ENCODE measurements at regions of chr15 and their contacts with region 1.

Region 1: GRCh38 chr15:71386448-71387236 is 271.4 kb downstream of the THSD4 start:
- DNase-seq: no peak
- H3K4me3 ChIP-seq: no peak overlapping the region
- H3K27ac ChIP-seq: no peak overlapping the region
- H3K4me1 ChIP-seq: 0 out of 2 replicates have a peak, but pooled peaks cover 7% of the 10 kb centered on the region
- H3K27me3 ChIP-seq: no peaks in the 10 kb centered on the region
- CTCF ChIP-seq: peak; percentile 59

Region 2: GRCh38 chr15:71136793-71137518 is 249.7 kb before region 1 on chr15:
- CTCF ChIA-PET with region 1: no interaction called
- POLR2A ChIA-PET with region 1: no interaction called
- intact Hi-C with region 1: no loop called
- DNase-seq: no peak
- H3K4me3 ChIP-seq: no peak overlapping the region
- H3K27ac ChIP-seq: no peak overlapping the region
- H3K4me1 ChIP-seq: peaks cover 22% of the 10 kb centered on the region
- H3K27me3 ChIP-seq: no peaks in the 10 kb centered on the region
- CTCF ChIP-seq: no peak

Region 3: DNA sequence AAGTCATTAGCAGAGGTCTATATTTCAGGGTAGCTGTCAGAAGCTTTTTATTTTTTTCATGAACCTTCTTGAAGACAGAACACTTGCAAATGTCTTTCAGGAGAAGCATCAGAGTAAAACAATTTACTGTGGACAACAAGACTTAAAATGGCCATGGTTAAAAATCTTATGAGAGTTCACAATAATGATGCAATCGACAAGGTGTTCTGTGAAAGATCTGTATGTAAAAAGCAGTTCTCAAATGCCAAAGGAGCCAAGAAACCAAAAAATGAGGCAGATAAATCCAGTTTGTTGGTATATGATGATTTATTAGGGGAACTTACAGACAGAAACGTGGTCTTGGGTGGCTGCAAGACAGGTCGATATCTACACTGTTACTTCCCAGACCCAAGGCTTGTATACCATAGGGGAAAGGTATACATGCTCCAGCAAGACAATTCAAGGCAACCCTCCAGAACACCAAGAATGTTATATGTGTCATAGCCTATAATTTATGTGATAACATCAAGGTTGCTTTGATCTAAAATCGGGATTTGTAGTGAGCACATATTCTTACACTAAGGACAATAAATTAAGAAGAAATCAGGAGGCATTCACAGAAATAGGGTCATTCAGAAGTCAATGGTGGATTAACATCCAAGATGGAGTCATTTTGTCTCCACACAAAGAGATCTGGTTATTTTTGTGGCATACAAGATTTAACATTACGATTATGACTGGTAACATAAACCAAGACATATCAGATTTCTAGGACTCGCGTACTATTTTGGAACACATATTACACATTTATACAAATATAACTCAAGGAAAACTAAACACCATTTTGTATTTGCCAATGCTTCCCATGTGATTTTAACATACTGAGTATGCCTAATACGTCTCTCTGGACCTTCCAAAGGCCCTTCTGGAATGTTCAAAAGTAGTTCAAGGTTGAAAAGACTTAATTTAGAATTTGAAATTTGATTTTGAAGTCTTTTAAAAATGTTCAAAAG is 45.0 kb after region 1 on chr15:
- CTCF ChIA-PET with region 1: interaction called, 17 read pairs
- POLR2A ChIA-PET with region 1: interaction called, 10 read pairs
- intact Hi-C with region 1: no loop called
- DNase-seq: no peak
- H3K4me3 ChIP-seq: no peak overlapping the region
- H3K27ac ChIP-seq: peak overlapping the region; percentile 37; the same call in 1 of the 2 replicates
- H3K4me1 ChIP-seq: no peaks in the 10 kb centered on the region; the same call in none of the 2 replicates
- H3K27me3 ChIP-seq: no peaks in the 10 kb centered on the region
- CTCF ChIP-seq: no peak

Region 4: GRCh38 chr15:71437404-71438318 is 51.0 kb after region 1 on chr15:
- CTCF ChIA-PET with region 1: interaction called, 17 read pairs
- POLR2A ChIA-PET with region 1: no interaction called
- intact Hi-C with region 1: no loop called
- DNase-seq: peak; percentile 48 to 56
- H3K4me3 ChIP-seq: no peak overlapping the region
- H3K27ac ChIP-seq: peak overlapping the region; percentile 40
- H3K4me1 ChIP-seq: peaks cover 30% of the 10 kb centered on the region
- H3K27me3 ChIP-seq: no peaks in the 10 kb centered on the region
- CTCF ChIP-seq: no peak

Region 5: GRCh38 chr15:71761649-71762369 is 375.2 kb after region 1 on chr15:
- CTCF ChIA-PET with region 1: no interaction called
- POLR2A ChIA-PET with region 1: no interaction called
- intact Hi-C with region 1: no loop called
- DNase-seq: peak; percentile 79 to 96
- H3K4me3 ChIP-seq: no peak overlapping the region
- H3K27ac ChIP-seq: peak overlapping the region; percentile 76
- H3K4me1 ChIP-seq: peaks cover 17% of the 10 kb centered on the region
- H3K27me3 ChIP-seq: no peaks in the 10 kb centered on the region
- CTCF ChIP-seq: no peak

Measured in PC-9 (cell line).